Psoas muscle (tissue), 8 donors: ENCODE measurements at regions of chr1 and their contacts with region 1.

Region 1: DNA sequence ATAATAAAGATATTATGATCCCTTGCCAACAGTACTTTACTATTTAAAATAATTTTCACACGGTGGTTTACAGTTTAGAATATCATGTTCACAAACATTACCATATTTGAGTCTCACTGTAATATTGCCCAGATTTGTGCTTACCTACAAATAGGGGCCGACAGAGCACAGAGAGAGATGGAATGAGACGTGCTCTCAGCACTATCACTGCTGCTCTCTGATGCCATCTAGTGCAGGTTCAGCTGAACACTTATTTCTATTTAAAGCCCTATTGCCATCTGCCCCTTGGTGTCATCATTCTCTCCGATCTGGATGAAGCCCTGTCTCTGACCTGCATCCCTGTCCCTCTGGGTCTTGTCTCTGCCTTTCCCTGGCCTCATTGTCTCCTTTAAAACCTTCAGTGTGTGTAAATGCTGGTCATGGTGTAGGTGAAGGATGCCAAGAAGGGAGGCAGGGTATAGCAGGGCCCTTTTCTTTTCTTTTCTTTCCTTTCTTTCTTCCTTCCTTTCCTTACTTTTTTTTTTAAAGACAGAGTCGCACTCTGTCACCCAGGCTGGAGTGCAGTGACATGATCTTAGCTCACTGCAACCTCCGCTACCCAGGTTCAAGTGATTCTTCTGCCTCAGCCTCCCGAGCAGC is 6.9 kb upstream of the GPATCH4 start:
- DNase-seq: no peak
- ATAC-seq: peak; percentile 98 to 100 (median 99)
- H3K4me3 ChIP-seq: no peak overlapping the region
- H3K27ac ChIP-seq: no peak overlapping the region
- H3K4me1 ChIP-seq: no peaks in the 10 kb centered on the region
- H3K27me3 ChIP-seq: no peaks in the 10 kb centered on the region
- CTCF ChIP-seq: peak; percentile 81

Region 2: GRCh38 chr1:156385534-156386031 is 222.6 kb before region 1 on chr1:
- intact Hi-C with region 1: loop called in 1 of 2 experiments (anchors 5 kb)
- DNase-seq: peak; percentile 39 to 72
- ATAC-seq: peak; percentile 47 to 85 (median 74)
- H3K4me3 ChIP-seq: no peak overlapping the region
- H3K27ac ChIP-seq: no peak overlapping the region
- H3K4me1 ChIP-seq: no peaks in the 10 kb centered on the region
- H3K27me3 ChIP-seq: peaks cover 0 to 31% (median 6%) of the 10 kb centered on the region in 3 donors
- CTCF ChIP-seq: peak; percentile 89

Region 3: DNA sequence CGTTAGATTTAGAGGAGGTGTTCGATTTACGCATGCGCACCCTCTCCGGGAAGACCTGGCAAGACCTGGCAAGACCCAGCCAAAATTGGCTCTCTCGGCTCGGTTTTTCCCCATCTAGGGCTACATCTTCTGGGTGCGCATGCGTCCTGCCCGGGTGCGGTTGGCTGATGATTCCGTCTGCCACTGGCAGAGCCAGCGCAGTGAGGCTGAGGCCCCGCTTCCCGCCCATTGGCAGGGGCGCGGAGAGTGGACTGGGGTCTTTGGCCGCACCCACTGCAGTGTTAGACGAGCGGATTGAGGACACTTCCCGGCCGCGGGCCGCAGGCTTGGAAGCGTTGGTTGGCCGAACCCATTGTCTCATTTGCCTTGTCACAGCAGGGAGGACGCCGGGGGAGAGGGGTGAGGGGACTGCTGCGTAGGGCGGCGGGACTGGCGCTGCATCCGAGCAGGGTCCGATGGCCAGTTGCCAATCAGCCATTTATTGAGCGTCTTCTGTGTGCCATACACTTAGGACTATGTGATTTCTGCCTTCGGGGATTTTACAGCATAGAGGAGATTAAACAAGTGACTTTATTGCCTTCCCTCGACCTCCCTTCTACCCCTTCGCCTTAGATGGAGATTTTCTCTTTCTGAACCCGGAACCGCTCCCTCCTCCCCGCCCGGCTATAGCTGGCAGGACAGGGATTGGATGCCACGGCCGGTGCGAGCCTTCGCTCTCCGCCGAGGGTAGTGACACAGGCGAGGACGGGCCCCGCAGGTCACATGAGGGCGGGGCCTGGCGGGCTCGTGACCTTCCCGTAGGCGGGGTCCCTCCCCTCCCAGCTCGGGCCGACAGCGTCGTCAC is 151.3 kb before region 1 on chr1:
- intact Hi-C with region 1: loop called (anchors 2 to 5 kb)
- DNase-seq: peak; percentile 98 to 99
- ATAC-seq: peak; percentile 89 to 91 (median 90)
- H3K4me3 ChIP-seq: peak overlapping the region; percentile 74
- H3K27ac ChIP-seq: peak overlapping the region; percentile 99
- H3K4me1 ChIP-seq: peaks cover 8% of the 10 kb centered on the region
- H3K27me3 ChIP-seq: no peaks in the 10 kb centered on the region
- CTCF ChIP-seq: no peak

Region 4: GRCh38 chr1:156577550-156577949 is 30.6 kb before region 1 on chr1:
- intact Hi-C with region 1: loop called in 1 of 2 experiments (anchors 5 kb)
- DNase-seq: no peak
- ATAC-seq: no peak
- H3K4me3 ChIP-seq: no peak overlapping the region
- H3K27ac ChIP-seq: no peak overlapping the region
- H3K4me1 ChIP-seq: no peaks in the 10 kb centered on the region
- H3K27me3 ChIP-seq: no peaks in the 10 kb centered on the region
- CTCF ChIP-seq: no peak